ENCODE measurements at regions of chr11 and their contacts with region 1.

Region 1: DNA sequence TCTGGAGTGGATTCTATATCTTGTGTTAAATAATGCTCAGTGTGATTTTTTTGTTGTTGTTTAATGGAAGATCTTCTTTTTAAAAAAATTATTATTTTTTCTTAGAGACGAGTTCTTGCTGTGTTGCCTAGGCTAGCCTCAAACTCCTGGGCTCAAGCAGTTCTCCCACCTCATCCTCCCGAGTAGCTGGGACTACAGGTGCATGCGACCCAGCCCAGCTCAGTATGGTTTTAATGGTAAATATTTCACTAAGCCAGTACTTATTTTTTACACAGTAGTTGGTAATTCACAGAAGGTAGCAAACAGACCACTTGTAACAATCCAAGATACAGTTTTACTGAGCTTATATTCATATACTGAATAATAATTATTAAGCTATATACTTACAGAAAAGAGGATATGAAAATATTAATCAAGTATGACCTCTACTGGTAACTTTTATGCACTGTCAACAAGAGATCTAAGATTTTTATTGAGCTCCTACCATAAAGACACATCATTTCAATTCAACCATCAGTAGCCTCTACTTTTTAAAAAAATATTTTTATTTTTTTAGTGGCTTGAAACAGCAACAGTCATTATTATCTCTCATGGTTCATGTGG is 6.1 kb upstream of the CD59 start:
- DNase-seq: peak in 1 of 5 donors; percentile 17
- H3K4me3 ChIP-seq: no peak overlapping the region
- H3K4me3 Mint-ChIP-seq: no peak overlapping the region
- H3K27ac ChIP-seq: no peak overlapping the region
- H3K27ac Mint-ChIP-seq: peak overlapping the region in 2 of 8 donors; percentile 32 to 58
- H3K4me1 ChIP-seq: no peaks in the 10 kb centered on the region
- H3K4me1 Mint-ChIP-seq: peaks cover 0 to 3% (median 0%) of the 10 kb centered on the region in 3 donors
- H3K27me3 ChIP-seq: no peaks in the 10 kb centered on the region
- H3K27me3 Mint-ChIP-seq: no peaks in the 10 kb centered on the region

Region 2: GRCh38 chr11:33362051-33362910 is 380.1 kb before region 1 on chr11:
- CTCF ChIA-PET with region 1: interaction called, 18 read pairs
- POLR2A ChIA-PET with region 1: no interaction called
- DNase-seq: peak in 2 of 5 donors; percentile 12 to 32
- H3K4me3 ChIP-seq: no peak overlapping the region
- H3K4me3 Mint-ChIP-seq: peak overlapping the region in 1 of 7 donors; percentile 36
- H3K27ac ChIP-seq: no peak overlapping the region
- H3K27ac Mint-ChIP-seq: peak overlapping the region in 1 of 8 donors; percentile 30
- H3K4me1 ChIP-seq: no peaks in the 10 kb centered on the region
- H3K4me1 Mint-ChIP-seq: peaks cover 4 to 7% (median 6%) of the 10 kb centered on the region in 3 donors
- H3K27me3 ChIP-seq: no peaks in the 10 kb centered on the region
- H3K27me3 Mint-ChIP-seq: peaks cover 0 to 4% of the 10 kb centered on the region in 2 donors

Region 3: DNA sequence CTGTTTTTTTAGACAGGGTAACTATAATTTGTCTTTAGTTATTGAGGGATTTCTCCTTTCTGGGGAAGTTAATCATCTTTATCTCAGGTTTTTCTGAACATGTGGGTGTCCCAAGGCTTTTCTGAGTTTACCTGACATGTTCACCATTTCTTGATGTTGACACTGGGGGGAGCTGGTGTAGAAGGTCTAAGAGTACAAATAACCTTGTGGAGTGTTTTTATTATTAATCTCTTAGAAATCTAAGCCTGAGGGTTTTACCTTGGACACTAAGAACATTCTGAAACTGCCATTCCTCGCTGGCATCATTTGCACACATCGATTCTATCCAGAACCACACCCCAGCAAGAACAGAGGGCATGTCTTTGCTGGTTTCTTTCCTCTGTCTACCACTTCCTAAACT is 26.1 kb before region 1 on chr11:
- CTCF ChIA-PET with region 1: interaction called, 15 read pairs
- POLR2A ChIA-PET with region 1: no interaction called
- DNase-seq: no peak
- H3K4me3 ChIP-seq: no peak overlapping the region
- H3K4me3 Mint-ChIP-seq: no peak overlapping the region
- H3K27ac ChIP-seq: no peak overlapping the region
- H3K27ac Mint-ChIP-seq: no peak overlapping the region
- H3K4me1 ChIP-seq: no peaks in the 10 kb centered on the region
- H3K4me1 Mint-ChIP-seq: no peaks in the 10 kb centered on the region
- H3K27me3 ChIP-seq: no peaks in the 10 kb centered on the region
- H3K27me3 Mint-ChIP-seq: no peaks in the 10 kb centered on the region

Region 4: GRCh38 chr11:33787076-33787475 is 44.7 kb after region 1 on chr11:
- CTCF ChIA-PET with region 1: no interaction called
- POLR2A ChIA-PET with region 1: no interaction called
- DNase-seq: no peak
- H3K4me3 ChIP-seq: no peak overlapping the region
- H3K4me3 Mint-ChIP-seq: no peak overlapping the region
- H3K27ac ChIP-seq: no peak overlapping the region
- H3K27ac Mint-ChIP-seq: no peak overlapping the region
- H3K4me1 ChIP-seq: no peaks in the 10 kb centered on the region
- H3K4me1 Mint-ChIP-seq: no peaks in the 10 kb centered on the region
- H3K27me3 ChIP-seq: no peaks in the 10 kb centered on the region
- H3K27me3 Mint-ChIP-seq: peaks cover 22 to 67% of the 10 kb centered on the region in 2 donors